Activated CD4-positive, alpha-beta memory T cell treated with anti-CD3 and anti-CD28 coated beads, Interleukin-2, amount 10 ng/mL, durations not matched to agents 7 days and 5 days (primary cell): ENCODE measurements at regions of chr6 and their contacts with region 1.

Region 1: GRCh38 chr6:108921547-108922361 is 73.5 kb downstream of the ARMC2 start:
- DNase-seq: peak; percentile 63
- H3K4me3 Mint-ChIP-seq: no peak overlapping the region
- H3K27ac Mint-ChIP-seq: peak overlapping the region; percentile 78
- H3K4me1 Mint-ChIP-seq: peaks cover 49% of the 10 kb centered on the region
- H3K27me3 Mint-ChIP-seq: peaks cover 67% of the 10 kb centered on the region

Region 2: GRCh38 chr6:108661430-108661829 is 260.3 kb before region 1 on chr6:
- CTCF ChIA-PET with region 1: no interaction called
- POLR2A ChIA-PET with region 1: no interaction called
- DNase-seq: no peak
- H3K4me3 Mint-ChIP-seq: no peak overlapping the region
- H3K27ac Mint-ChIP-seq: no peak overlapping the region
- H3K4me1 Mint-ChIP-seq: peaks cover 18% of the 10 kb centered on the region
- H3K27me3 Mint-ChIP-seq: no peaks in the 10 kb centered on the region

Region 3: DNA sequence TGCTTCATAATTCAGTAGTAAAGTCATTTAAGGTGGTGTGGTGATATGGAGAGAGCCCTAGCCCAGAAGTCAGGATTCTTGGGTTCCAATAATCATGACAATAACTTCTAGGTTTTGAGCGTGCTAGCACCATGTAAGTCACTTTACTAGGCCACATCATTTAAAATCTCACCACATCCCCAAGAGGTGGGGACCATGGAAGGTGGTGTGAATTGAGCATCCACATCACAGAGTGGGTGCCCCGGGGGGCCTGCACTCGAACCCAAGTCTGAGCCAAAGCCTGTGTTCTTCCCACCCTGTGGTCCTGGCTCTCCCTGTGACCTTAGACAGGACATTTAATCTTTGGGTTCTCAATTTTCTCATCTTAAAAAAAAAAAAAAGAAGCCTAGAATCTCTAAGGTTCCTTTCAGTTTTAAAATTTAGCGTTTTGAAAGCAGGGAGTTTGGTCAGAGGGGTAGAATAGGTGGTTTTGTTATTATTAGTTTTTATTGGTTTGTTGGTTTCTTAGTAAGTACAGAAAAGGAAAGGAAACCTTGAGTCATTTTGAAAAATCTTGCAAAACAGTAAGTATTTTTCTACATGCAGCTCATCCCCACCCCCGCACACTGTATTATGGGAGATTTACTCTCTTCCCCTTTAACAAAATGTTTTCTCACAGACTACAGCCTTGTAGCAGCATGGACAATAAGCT is 47.1 kb before region 1 on chr6:
- CTCF ChIA-PET with region 1: interaction called, 4 read pairs
- POLR2A ChIA-PET with region 1: interaction called, 27 read pairs
- DNase-seq: peak; percentile 75
- H3K4me3 Mint-ChIP-seq: peak overlapping the region; percentile 75
- H3K27ac Mint-ChIP-seq: peak overlapping the region; percentile 100
- H3K4me1 Mint-ChIP-seq: peaks cover 74% of the 10 kb centered on the region
- H3K27me3 Mint-ChIP-seq: peaks cover 8% of the 10 kb centered on the region

Region 4: GRCh38 chr6:108902382-108902792 is 19.4 kb before region 1 on chr6:
- CTCF ChIA-PET with region 1: interaction called, 12 read pairs
- POLR2A ChIA-PET with region 1: interaction called, 6 read pairs
- DNase-seq: no peak
- H3K4me3 Mint-ChIP-seq: no peak overlapping the region
- H3K27ac Mint-ChIP-seq: peak overlapping the region; percentile 89
- H3K4me1 Mint-ChIP-seq: peaks cover 47% of the 10 kb centered on the region
- H3K27me3 Mint-ChIP-seq: peaks cover 7% of the 10 kb centered on the region

Region 5: GRCh38 chr6:108942556-108943492 is 21.1 kb after region 1 on chr6:
- CTCF ChIA-PET with region 1: interaction called, 9 read pairs
- POLR2A ChIA-PET with region 1: interaction called, 10 read pairs
- DNase-seq: peak; percentile 75
- H3K4me3 Mint-ChIP-seq: peak overlapping the region; percentile 51
- H3K27ac Mint-ChIP-seq: peak overlapping the region; percentile 82
- H3K4me1 Mint-ChIP-seq: peaks cover 60% of the 10 kb centered on the region
- H3K27me3 Mint-ChIP-seq: peaks cover 3% of the 10 kb centered on the region

Region 6: GRCh38 chr6:109009236-109009961 is 87.6 kb after region 1 on chr6:
- CTCF ChIA-PET with region 1: no interaction called
- POLR2A ChIA-PET with region 1: interaction called, 13 read pairs
- DNase-seq: peak; percentile 92
- H3K4me3 Mint-ChIP-seq: peak overlapping the region; percentile 88
- H3K27ac Mint-ChIP-seq: peak overlapping the region; percentile 72
- H3K4me1 Mint-ChIP-seq: peaks cover 39% of the 10 kb centered on the region
- H3K27me3 Mint-ChIP-seq: peaks cover 8% of the 10 kb centered on the region

Region 7: DNA sequence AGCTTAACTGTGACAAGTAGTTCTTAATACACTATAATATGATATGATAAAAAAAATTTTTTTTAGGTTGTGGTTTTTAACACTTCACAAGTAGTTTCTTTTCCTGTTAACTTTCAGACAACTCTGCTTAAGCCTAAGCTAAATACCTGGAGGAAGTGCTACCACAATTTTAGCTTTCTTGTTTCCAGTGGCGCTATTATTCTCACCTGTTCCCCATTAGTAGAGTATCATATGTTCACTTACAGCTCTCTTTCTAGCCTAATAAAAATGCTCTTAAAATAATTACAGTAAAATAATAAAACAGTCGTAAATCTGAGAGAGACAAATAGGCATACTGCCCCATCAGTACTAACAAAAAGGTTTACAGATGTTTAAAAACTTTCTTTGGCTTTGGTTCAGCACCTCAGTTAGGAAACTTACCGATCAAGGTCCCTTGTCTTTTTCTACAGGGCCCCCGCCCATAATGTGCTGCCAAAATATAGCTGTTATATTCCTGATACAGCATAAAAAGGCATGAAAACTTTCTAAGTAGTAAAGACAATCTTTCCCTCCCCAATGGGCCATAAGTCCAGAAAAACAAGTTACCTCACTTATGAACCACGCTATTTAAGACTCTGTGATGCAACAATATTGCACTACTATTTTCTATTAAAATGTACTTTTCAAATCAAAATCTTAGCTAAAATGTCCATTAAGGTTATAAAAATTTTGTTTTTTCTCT is 115.0 kb after region 1 on chr6:
- CTCF ChIA-PET with region 1: interaction called, 3 read pairs
- POLR2A ChIA-PET with region 1: interaction called, 10 read pairs
- DNase-seq: no peak
- H3K4me3 Mint-ChIP-seq: no peak overlapping the region
- H3K27ac Mint-ChIP-seq: no peak overlapping the region
- H3K4me1 Mint-ChIP-seq: peaks cover 13% of the 10 kb centered on the region
- H3K27me3 Mint-ChIP-seq: peaks cover 12% of the 10 kb centered on the region